Endothelial cell of umbilical vein (primary cell): ENCODE measurements at regions of chr15 and their contacts with region 1.

Region 1: DNA sequence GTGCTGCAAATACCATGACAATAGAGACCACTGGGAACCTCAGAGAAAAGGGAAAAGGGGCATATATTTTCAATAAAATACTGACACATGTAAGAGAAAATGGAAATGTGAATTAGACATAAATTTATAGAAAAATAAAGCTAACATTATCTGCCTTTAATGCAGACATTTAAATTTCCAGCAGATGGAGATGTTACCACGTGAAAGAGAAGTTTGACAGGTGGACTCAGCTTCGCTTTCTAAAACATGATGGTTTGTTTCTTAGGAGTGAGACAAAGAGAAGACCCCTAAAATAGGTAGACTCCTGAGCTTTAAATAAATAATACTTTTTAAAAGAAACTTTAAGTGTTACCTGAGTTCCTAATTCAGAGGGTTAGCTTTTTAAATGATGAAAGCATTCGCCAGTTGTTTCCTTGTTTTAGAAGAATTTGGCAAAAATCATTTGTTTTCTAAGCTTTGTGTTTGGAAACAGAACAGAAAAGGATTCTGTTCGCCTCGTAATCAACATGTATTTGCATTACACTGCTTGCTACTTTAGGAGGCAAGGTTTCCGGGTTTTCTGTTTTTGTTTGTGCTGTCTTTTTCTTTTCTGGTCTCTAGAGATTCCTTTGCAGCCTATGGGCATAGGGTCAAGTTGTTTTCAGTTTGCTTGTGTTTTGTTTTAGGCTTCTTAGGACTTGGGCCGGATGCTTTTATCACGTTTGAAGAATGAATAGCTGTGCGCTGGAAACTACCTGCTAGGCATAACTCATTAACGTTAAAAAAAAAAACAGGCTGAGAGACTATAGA is 271.4 kb downstream of the THSD4 start:
- DNase-seq: peak; percentile 44
- H3K4me3 ChIP-seq: no peak overlapping the region
- H3K27ac ChIP-seq: no peak overlapping the region
- H3K4me1 ChIP-seq: peaks cover 11% of the 10 kb centered on the region
- H3K27me3 ChIP-seq: no peaks in the 10 kb centered on the region
- CTCF ChIP-seq: peak; percentile 11 to 12
- POLR2A ChIP-seq: no peak

Region 2: GRCh38 chr15:71120425-71120944 is 266.2 kb before region 1 on chr15:
- CTCF ChIA-PET with region 1: interaction called, 4 read pairs
- POLR2A ChIA-PET with region 1: no interaction called
- dilution Hi-C with region 1: no loop called
- intact Hi-C with region 1: loop called (anchors 1 kb)
- DNase-seq: no peak
- H3K4me3 ChIP-seq: no peak overlapping the region
- H3K27ac ChIP-seq: no peak overlapping the region
- H3K4me1 ChIP-seq: peaks cover 7% of the 10 kb centered on the region
- H3K27me3 ChIP-seq: no peaks in the 10 kb centered on the region
- CTCF ChIP-seq: no peak
- POLR2A ChIP-seq: no peak

Region 3: DNA sequence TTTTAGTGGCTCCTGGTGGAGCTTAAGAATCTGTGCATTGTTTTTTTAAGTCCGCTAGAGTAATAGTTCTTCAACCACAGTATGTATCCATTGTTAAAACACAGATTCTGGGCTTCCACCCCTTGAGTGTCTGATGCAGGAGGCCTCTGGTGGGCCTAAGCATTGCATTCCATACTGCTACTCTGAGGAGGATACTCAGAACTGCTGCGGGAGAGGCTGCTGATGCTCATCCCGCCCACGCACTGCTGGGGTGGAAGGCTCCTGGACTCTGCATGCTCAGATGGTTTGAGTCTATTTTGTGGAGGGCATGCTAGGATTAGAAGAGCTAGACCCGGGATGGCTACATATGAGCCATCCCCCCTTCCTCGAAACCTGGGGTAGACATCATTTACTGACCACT is 196.9 kb before region 1 on chr15:
- CTCF ChIA-PET with region 1: no interaction called
- POLR2A ChIA-PET with region 1: no interaction called
- dilution Hi-C with region 1: no loop called
- intact Hi-C with region 1: no loop called
- DNase-seq: no peak
- H3K4me3 ChIP-seq: no peak overlapping the region
- H3K27ac ChIP-seq: no peak overlapping the region
- H3K4me1 ChIP-seq: no peaks in the 10 kb centered on the region
- H3K27me3 ChIP-seq: no peaks in the 10 kb centered on the region
- CTCF ChIP-seq: no peak
- POLR2A ChIP-seq: no peak

Region 4: GRCh38 chr15:71448688-71449114 is 62.1 kb after region 1 on chr15:
- CTCF ChIA-PET with region 1: interaction called, 22 read pairs
- POLR2A ChIA-PET with region 1: no interaction called
- dilution Hi-C with region 1: no loop called
- intact Hi-C with region 1: loop called (anchors 1 kb)
- DNase-seq: peak; percentile 87
- H3K4me3 ChIP-seq: no peak overlapping the region
- H3K27ac ChIP-seq: no peak overlapping the region
- H3K4me1 ChIP-seq: peaks cover 21% of the 10 kb centered on the region
- H3K27me3 ChIP-seq: no peaks in the 10 kb centered on the region
- CTCF ChIP-seq: peak; percentile 73 to 87
- POLR2A ChIP-seq: no peak

Region 5: DNA sequence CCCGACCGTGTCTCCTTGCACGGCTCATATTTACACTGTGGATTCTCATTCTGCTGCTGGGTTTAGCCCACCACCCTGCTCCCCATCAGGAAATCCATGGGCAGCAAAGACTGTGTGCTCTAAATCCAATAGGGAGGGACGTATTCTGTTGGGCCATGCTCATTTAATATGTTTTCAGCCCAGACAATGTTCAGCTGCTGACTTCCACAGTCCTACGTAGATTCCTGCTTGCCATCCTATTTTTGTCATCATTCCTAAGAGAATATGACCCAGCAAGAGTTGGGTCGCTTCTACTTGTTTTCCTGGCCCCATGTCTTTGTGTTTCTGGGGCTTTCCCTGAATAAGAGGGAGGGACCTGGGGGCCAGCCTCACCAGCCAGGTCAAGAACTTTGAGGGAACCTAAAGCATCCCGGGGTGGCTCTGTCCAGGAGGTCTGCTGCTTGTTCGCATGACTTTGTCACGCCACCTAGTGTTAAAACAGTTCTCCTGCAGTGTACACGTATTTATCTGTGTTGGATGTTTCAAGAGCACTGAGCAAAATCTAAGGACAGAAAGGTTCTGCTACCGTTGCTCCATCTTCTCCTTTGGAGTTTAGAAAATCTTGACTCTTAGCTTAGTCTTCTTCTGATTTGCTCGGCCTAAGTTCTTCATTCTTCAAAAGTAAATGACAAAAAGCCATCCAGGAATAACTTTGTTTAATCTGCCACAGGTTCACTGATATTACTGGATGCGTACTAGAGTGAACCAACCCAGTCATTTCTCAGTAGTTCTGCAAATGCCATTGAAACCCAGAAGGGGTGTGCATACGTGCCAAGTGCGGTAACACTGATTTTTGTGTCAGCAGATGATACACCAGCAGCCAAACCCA is 343.9 kb after region 1 on chr15:
- CTCF ChIA-PET with region 1: interaction called, 3 read pairs
- POLR2A ChIA-PET with region 1: no interaction called
- dilution Hi-C with region 1: no loop called
- intact Hi-C with region 1: loop called (anchors 10 kb)
- DNase-seq: peak; percentile 66
- H3K4me3 ChIP-seq: no peak overlapping the region
- H3K27ac ChIP-seq: no peak overlapping the region
- H3K4me1 ChIP-seq: no peaks in the 10 kb centered on the region
- H3K27me3 ChIP-seq: peaks cover 0 to under 1% of the 10 kb centered on the region in 2 experiments
- CTCF ChIP-seq: peak; percentile 67 to 76
- POLR2A ChIP-seq: no peak